ENCODE measurements at regions of chr2 and their contacts with region 1.

Region 1: GRCh38 chr2:65129826-65130663 is at the start of gene RAB1A:
- DNase-seq: peak; percentile 97 to 100 (median 99)
- H3K4me3 ChIP-seq: peak within 1 kb of the TSS; percentile 81
- H3K4me3 Mint-ChIP-seq: peak within 1 kb of the TSS; percentile 92 to 100 (median 99)
- H3K27ac ChIP-seq: peak within 1 kb of the TSS; percentile 89
- H3K27ac Mint-ChIP-seq: peak within 1 kb of the TSS; percentile 82 to 100 (median 99)
- H3K4me1 ChIP-seq: peaks cover 40% of the 10 kb centered on the region
- H3K4me1 Mint-ChIP-seq: peaks cover 37 to 47% (median 42%) of the 10 kb centered on the region in 3 donors
- H3K27me3 ChIP-seq: no peaks in the 10 kb centered on the region
- H3K27me3 Mint-ChIP-seq: peaks cover 0 to 3% of the 10 kb centered on the region in 2 donors
- total RNA-seq, gene RAB1A: 88.1 to 91.9 TPM

Region 2: DNA sequence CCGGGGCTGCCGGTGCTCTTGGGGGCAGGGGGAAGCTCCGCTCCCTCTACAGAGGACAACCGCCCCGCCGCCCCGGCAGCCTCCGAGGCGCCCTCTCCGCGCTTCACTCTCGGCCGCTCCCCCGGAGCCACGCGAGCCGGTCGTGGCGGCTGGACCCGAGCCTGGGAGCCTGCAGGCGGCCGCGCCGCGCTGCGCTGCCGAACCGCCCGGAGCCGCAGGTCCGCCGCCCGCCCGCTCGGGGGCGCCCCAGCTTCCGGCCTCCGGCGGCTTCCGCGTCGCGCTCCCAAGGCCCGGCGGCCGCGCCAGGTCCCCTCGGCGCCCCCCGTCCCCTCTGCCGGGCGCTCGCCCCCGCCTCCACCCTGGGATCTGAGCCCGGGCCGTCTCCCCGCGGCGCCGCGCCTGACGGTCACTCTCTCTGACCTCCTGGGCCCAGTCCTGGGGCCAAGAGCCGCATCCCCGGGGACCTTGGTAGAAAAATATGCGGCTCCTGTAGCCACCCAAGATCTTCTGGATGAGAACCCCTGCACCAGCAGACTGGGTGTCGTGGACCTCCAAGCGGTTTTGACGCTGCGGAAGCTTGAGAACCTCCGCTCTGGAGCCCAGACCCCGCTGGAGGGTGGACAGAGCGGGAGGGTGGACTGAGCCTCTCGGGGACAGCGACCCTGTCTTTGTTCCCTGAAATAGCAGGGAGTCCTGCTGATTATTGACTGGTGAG is 520.7 kb before region 1 on chr2:
- CTCF ChIA-PET with region 1: no interaction called
- POLR2A ChIA-PET with region 1: interaction called, 12 read pairs
- DNase-seq: peak; percentile 58 to 76 (median 73)
- H3K4me3 ChIP-seq: peak overlapping the region; percentile 76
- H3K4me3 Mint-ChIP-seq: peak overlapping the region; percentile 68 to 91 (median 77)
- H3K27ac ChIP-seq: peak overlapping the region; percentile 75
- H3K27ac Mint-ChIP-seq: peak overlapping the region in 7 of 8 donors; percentile 30 to 90 (median 68)
- H3K4me1 ChIP-seq: peaks cover 28% of the 10 kb centered on the region
- H3K4me1 Mint-ChIP-seq: peaks cover 20 to 40% (median 29%) of the 10 kb centered on the region in 3 donors
- H3K27me3 ChIP-seq: no peaks in the 10 kb centered on the region
- H3K27me3 Mint-ChIP-seq: no peaks in the 10 kb centered on the region

Region 3: GRCh38 chr2:64914735-64915509 is 215.1 kb before region 1 on chr2:
- CTCF ChIA-PET with region 1: interaction called, 10 read pairs
- POLR2A ChIA-PET with region 1: interaction called, 3 read pairs
- DNase-seq: no peak
- H3K4me3 ChIP-seq: no peak overlapping the region
- H3K4me3 Mint-ChIP-seq: no peak overlapping the region
- H3K27ac ChIP-seq: no peak overlapping the region
- H3K27ac Mint-ChIP-seq: peak overlapping the region in 1 of 8 donors; percentile 66
- H3K4me1 ChIP-seq: peaks cover 12% of the 10 kb centered on the region
- H3K4me1 Mint-ChIP-seq: peaks cover 7 to 19% (median 16%) of the 10 kb centered on the region in 3 donors
- H3K27me3 ChIP-seq: no peaks in the 10 kb centered on the region
- H3K27me3 Mint-ChIP-seq: no peaks in the 10 kb centered on the region

Region 4: GRCh38 chr2:65056215-65057053 is 73.6 kb before region 1 on chr2 and contains the start of gene CEP68:
- CTCF ChIA-PET with region 1: interaction called, 24 read pairs
- POLR2A ChIA-PET with region 1: interaction called, 51 read pairs
- DNase-seq: peak; percentile 93 to 97 (median 95)
- H3K4me3 ChIP-seq: peak within 1 kb of the TSS; percentile 65
- H3K4me3 Mint-ChIP-seq: peak within 1 kb of the TSS; percentile 85 to 98 (median 97)
- H3K27ac ChIP-seq: peak within 1 kb of the TSS; percentile 55
- H3K27ac Mint-ChIP-seq: peak within 1 kb of the TSS; percentile 71 to 96 (median 94)
- H3K4me1 ChIP-seq: peaks cover 61% of the 10 kb centered on the region
- H3K4me1 Mint-ChIP-seq: peaks cover 53 to 76% (median 72%) of the 10 kb centered on the region in 3 donors
- H3K27me3 ChIP-seq: no peaks in the 10 kb centered on the region
- H3K27me3 Mint-ChIP-seq: peaks cover 0 to 1% of the 10 kb centered on the region in 2 donors
- total RNA-seq, gene CEP68: 7.2 to 7.4 TPM

Region 5: DNA sequence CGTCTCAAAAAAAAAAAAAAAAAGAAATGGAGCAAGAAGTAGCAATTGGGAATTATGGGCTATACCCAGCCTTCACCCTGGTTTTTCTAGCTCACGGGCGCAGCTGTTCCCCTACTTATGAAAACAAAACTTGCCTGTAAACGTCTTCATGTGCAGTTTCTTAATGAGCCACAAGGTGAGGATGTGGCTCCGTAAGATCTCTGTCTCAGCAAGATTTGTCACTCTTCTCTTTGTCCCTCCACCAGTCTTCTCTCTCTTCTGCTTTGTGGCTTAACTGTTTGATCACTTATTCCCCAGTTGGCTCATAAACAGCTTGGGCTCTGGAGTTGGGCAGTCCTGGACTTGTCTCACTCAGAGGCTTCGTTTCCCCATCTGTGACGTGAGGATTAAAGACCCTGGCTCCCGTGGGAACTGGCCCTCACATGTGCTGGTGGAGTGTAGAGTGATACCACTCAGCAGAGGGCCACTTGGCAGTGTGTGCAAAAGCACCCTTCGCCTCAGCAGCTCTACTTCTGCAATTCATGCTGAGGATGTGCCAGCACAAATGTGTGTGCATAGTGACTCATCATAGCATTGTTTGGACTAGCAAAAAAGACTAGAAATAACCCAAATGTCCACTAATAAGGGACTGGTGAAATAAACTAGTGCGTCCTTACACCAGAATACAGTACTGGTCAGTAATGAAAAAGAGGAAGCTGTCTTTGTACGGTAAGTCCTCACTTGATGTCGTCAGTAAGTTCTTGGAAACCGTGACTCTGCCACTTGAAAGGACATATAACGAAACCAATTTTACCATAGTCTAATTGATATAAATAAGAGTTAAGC is 65.1 kb before region 1 on chr2:
- CTCF ChIA-PET with region 1: interaction called, 11 read pairs
- POLR2A ChIA-PET with region 1: no interaction called
- DNase-seq: peak in 3 of 5 donors; percentile 45 to 59 (median 57)
- H3K4me3 ChIP-seq: no peak overlapping the region
- H3K4me3 Mint-ChIP-seq: peak overlapping the region in 1 of 7 donors; percentile 51
- H3K27ac ChIP-seq: peak overlapping the region; percentile 68
- H3K27ac Mint-ChIP-seq: peak overlapping the region in 3 of 8 donors; percentile 73 to 93 (median 79)
- H3K4me1 ChIP-seq: peaks cover 20% of the 10 kb centered on the region
- H3K4me1 Mint-ChIP-seq: peaks cover 35 to 63% (median 55%) of the 10 kb centered on the region in 3 donors
- H3K27me3 ChIP-seq: no peaks in the 10 kb centered on the region
- H3K27me3 Mint-ChIP-seq: no peaks in the 10 kb centered on the region

Region 6: DNA sequence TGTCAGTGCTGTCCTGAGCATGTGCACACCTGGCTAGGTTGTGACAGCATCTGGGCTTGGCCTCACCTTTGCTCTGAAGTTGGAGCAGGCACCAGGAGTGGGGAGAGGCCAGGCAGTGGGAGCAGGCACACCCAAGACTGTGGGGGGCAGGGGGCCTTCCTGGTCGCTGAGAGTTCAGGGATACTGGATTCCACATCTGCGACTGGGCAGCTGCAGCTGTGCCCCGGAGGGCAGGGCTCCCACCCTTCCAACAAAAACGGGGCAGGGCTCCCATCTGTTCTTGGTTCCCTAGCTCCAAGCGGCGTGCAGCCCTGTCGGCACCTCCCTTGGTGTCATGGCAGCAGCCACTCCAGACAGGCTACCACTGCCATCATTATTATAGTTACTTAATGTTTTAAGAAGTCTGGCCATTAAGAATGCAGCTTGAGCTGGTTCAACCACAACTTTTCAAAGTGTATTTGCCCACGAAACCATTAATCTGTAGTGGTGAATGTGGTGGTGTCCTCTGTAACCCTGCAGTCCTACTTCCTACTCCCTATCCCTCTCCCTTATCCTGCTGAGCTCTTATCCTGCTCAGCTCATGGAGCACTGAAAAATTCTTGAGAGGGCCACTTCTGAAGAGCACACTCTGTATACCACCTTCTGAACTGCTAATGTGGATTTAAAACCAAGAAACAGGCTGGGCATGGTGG is 47.9 kb after region 1 on chr2:
- CTCF ChIA-PET with region 1: no interaction called
- POLR2A ChIA-PET with region 1: no interaction called
- DNase-seq: no peak
- H3K4me3 ChIP-seq: no peak overlapping the region
- H3K4me3 Mint-ChIP-seq: no peak overlapping the region
- H3K27ac ChIP-seq: no peak overlapping the region
- H3K27ac Mint-ChIP-seq: no peak overlapping the region
- H3K4me1 ChIP-seq: no peaks in the 10 kb centered on the region
- H3K4me1 Mint-ChIP-seq: no peaks in the 10 kb centered on the region
- H3K27me3 ChIP-seq: no peaks in the 10 kb centered on the region
- H3K27me3 Mint-ChIP-seq: peaks cover 13 to 20% of the 10 kb centered on the region in 2 donors

Region 7: DNA sequence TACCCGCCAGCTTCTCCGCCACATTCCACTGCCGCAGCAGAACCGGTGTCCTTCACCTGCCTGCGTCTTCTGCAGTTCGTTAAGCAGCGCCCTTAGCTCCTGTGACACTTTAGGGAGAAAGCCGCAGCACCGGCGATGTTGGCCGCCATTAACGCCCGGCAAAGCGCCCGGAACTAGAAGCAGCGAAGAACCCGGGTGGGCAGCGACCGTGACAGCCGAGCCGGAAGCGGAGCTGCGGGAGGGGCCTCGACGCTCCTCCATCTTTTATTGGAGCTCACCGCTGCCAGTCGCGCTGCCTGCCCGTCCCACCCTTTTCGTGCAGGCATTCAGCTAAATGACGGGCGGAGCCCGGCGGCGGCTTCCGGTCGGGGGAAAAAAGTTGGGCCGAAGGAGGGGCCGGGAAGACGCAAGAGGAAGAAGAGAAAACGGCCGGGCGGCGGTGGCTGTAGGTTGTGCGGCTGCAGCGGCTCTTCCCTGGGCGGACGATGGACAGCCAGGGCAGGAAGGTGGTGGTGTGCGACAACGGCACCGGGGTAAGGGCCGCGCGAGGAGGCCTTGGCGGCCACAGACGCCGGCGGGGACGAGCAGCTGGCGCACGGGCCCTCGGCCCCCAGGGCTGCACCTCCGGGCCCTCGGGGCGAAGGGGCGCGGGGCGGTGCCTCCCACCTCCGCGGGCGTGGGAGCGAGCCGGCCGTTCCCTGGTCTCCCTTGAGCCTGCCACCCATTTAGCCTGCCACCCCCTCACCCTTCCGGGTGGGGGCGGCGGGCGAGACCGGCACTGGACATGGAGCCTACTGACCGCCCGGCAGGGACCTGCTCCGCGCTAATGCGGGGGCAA is 97.6 kb after region 1 on chr2 and contains the start of gene ACTR2:
- CTCF ChIA-PET with region 1: interaction called, 8 read pairs
- POLR2A ChIA-PET with region 1: interaction called, 44 read pairs
- DNase-seq: peak; percentile 90 to 96 (median 93)
- H3K4me3 ChIP-seq: peak within 1 kb of the TSS; percentile 97
- H3K4me3 Mint-ChIP-seq: peak within 1 kb of the TSS; percentile 91 to 99 (median 98)
- H3K27ac ChIP-seq: peak within 1 kb of the TSS; percentile 97
- H3K27ac Mint-ChIP-seq: peak within 1 kb of the TSS; percentile 91 to 99 (median 98)
- H3K4me1 ChIP-seq: peaks cover 40% of the 10 kb centered on the region
- H3K4me1 Mint-ChIP-seq: peaks cover 45 to 50% (median 47%) of the 10 kb centered on the region in 3 donors
- H3K27me3 ChIP-seq: no peaks in the 10 kb centered on the region
- H3K27me3 Mint-ChIP-seq: no peaks in the 10 kb centered on the region
- total RNA-seq, gene ACTR2: 294 to 306 TPM